Activated CD8-positive, alpha-beta T cell treated with anti-CD3 and anti-CD28 coated beads, Interleukin-2, amount 10 ng/mL, durations not matched to agents 7 days and 5 days (primary cell): ENCODE measurements at regions of chr2 and their contacts with region 1.

Region 1: GRCh38 chr2:25252281-25253105 is 84.1 kb upstream of the POMC start:
- DNase-seq: peak; percentile 68
- ATAC-seq: peak; percentile 70
- H3K4me3 Mint-ChIP-seq: peak overlapping the region; percentile 78
- H3K27ac Mint-ChIP-seq: peak overlapping the region; percentile 80
- H3K4me1 Mint-ChIP-seq: peaks cover 27% of the 10 kb centered on the region
- H3K27me3 Mint-ChIP-seq: no peaks in the 10 kb centered on the region

Region 2: DNA sequence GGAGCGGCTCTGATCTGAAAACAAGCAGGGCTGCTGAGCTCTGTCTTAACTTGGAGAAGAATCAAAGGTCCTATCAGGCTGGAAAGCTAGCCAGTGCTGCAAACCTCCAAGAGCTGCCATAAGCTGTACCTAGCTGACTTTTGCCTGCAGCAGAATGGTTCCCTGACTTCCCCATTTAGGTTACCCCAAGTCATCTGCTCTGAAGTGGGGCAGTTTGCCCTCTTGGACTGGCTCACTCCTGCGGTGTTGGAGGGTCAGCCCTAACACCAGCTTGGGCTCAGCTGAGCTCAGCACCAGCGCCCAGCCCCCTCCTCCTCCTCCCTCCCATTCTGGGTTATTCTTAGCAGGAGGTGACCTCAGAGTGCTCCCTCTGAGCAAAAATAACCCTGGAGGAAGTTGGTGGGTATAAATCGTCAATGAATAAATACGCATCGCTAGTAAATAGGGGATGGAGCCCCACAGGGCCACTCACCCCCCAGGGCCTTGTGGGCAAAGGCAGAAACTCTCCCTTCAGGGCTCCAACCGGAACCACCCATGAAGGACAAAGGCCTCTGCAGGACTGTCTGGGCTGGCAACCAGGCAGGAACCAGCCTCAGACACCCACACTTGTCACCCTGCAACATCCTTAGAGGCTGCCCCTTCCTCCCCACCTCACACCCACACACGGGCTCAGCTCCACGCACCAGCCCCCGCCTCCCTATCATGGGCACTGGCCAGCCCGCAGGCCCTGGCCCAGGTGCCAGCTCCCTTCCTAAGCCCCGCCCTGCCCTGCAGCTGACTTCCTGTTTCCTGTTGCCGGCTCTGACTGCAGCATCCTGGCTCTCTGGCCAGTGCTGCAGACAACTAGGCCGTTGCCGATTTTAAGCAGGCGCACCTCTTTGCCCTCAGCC is 42.3 kb after region 1 on chr2:
- CTCF ChIA-PET with region 1: interaction called, 3 read pairs
- POLR2A ChIA-PET with region 1: interaction called, 11 read pairs
- DNase-seq: peak; percentile 92
- ATAC-seq: peak; percentile 92
- H3K4me3 Mint-ChIP-seq: peak overlapping the region; percentile 70
- H3K27ac Mint-ChIP-seq: peak overlapping the region; percentile 93
- H3K4me1 Mint-ChIP-seq: peaks cover 73% of the 10 kb centered on the region
- H3K27me3 Mint-ChIP-seq: no peaks in the 10 kb centered on the region

Region 3: DNA sequence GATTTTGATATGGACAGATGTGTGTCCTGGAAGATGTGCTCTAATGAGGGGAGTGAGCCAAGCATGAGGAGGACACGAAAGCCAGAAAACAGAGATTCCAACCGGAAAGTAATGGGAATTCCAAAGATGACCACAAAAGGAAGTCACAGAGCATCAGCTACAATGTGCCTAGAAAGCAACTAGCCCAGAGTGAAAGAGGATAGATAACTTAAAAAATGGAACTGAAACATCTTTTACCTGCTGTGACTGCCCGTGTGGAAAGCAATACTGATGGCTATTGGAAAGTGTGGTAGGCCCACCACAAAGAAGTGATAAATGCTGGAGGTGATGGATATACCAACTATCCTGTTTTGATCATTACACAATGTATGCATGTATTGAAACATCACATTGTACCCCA is 67.6 kb after region 1 on chr2:
- CTCF ChIA-PET with region 1: no interaction called
- POLR2A ChIA-PET with region 1: no interaction called
- DNase-seq: no peak
- ATAC-seq: no peak
- H3K4me3 Mint-ChIP-seq: no peak overlapping the region
- H3K27ac Mint-ChIP-seq: no peak overlapping the region
- H3K4me1 Mint-ChIP-seq: peaks cover 53% of the 10 kb centered on the region
- H3K27me3 Mint-ChIP-seq: no peaks in the 10 kb centered on the region